Right ventricle myocardium inferior (tissue), 1 donor: ENCODE measurements at regions of chr1 and their contacts with region 1.

Region 1: GRCh38 chr1:8409106-8409505 is 91.2 kb downstream of the SLC45A1 start:
- DNase-seq: no peak
- ATAC-seq: peak; percentile 59

Region 2: GRCh38 chr1:8364528-8365442 is 44.3 kb before region 1 on chr1:
- intact Hi-C with region 1: no loop called
- DNase-seq: peak; percentile 79
- ATAC-seq: peak; percentile 53

Region 3: DNA sequence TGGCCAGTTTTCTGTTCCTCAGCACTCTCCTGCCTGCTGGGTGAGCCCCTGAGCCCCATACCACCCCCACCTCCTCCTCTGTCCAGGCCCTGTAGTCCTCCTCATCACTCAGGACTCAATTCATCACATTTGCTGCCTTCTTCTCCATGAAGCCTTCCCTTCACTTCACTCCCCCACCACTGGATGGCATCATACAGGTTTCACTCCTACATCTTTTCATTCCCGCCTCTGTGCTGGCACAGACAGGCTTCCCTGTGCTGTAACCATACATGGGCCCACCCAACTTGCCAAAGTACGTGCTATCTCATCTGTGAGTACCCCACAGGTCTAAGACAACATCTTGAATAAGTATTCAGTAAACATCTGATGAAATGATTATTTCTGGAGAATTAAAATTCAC is 34.3 kb before region 1 on chr1:
- intact Hi-C with region 1: loop called (anchors 5 kb)
- DNase-seq: no peak
- ATAC-seq: no peak

Region 4: DNA sequence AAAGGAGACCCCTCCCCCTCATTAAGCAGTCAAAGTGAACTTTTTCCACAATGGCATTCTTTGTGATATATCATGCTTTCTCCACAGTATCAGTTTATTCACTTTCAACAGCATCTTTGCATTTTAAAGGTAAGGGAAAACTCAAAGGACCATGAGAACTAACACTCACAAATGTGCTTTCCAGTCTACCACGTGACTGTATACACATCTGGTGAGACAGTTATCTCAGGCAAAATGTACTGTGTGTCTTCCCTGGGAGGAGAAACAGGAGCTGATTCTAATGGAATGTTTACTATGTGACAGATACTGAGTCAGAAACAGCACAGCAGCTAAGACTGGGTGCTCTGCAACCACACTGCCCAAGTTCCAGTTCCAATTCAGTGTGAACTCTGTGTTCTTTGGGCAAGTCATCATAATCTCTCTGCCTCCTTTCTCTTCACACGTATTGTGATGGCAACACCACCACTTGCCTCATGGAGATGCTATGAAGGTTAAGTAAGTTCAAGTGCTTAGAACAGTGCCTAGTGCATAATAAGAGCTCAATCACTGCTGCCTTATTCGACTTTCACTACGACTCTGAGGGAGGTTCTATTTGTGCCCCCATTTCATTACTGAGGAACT is 12.2 kb before region 1 on chr1:
- intact Hi-C with region 1: loop called (anchors 1 kb)
- DNase-seq: no peak
- ATAC-seq: peak; percentile 92

Region 5: GRCh38 chr1:8448911-8449661 is 40.0 kb after region 1 on chr1:
- intact Hi-C with region 1: no loop called
- DNase-seq: no peak
- ATAC-seq: peak; percentile 62

Region 6: DNA sequence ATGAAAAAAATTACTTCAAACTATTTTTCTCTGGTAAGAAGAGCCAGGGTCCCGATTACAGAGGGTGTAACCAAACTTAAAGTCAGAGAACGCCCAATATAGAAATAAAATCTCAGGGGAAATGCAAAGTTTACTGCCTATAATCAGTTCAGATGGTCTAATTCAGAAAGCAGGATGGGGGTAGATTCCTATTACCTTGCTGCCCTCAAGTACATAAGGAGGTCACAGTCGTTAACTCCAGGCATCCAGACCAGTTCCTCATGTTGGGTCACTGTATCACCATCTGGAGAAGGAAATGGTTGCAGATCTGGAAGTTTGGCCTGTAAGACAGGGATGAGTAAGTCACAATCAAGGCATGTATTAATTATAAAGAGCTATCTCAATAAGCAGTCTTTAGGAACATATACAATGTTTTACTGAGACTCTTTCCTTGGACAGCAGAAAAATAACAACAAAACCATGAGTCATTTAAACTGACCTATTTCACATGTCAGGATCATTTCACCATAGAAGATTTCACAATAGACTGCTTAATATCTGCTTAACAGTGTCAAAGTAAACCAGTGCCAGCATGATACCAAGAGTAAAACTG is 88.2 kb after region 1 on chr1:
- intact Hi-C with region 1: no loop called
- DNase-seq: no peak
- ATAC-seq: peak; percentile 81